ENCODE measurements at regions of chr10 and their contacts with region 1.

Region 1: DNA sequence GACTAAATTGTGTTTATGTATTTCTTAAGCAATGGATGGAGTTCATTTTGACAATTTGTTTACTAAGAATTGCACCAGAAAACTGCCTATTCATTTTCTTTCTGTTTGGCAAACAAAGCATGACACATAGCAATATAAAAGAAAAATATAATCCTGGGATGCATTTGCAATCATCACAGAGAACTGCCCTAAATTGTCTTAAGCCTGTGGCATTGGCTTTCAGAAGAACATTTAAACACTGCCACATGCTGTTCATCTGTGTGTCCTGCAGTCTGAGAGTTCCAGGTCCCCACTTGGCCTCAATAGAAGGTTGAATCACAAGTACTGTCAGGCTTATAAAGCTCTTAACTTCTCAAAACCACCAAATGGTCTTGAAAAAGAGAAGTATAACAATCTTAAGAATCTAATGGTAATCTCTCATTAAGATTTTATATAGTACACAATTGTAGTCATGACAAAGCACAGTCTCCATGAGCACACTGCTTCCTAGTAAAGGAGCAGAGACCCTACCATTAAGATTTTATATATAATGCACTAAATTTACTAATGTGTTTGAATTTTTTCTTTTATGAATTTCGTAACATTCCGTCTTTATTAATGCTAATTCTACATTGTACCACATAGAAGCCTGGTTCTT is 29.9 kb downstream of the RNLS start:
- DNase-seq: peak; percentile 30
- H3K4me3 ChIP-seq: no peak overlapping the region
- H3K27ac ChIP-seq: no peak overlapping the region
- H3K4me1 ChIP-seq: no peaks in the 10 kb centered on the region
- H3K27me3 ChIP-seq: no peaks in the 10 kb centered on the region
- CTCF ChIP-seq: peak in 3 of 4 experiments; percentile 57 to 83 (median 79)
- POLR2A ChIP-seq: no peak

Region 2: DNA sequence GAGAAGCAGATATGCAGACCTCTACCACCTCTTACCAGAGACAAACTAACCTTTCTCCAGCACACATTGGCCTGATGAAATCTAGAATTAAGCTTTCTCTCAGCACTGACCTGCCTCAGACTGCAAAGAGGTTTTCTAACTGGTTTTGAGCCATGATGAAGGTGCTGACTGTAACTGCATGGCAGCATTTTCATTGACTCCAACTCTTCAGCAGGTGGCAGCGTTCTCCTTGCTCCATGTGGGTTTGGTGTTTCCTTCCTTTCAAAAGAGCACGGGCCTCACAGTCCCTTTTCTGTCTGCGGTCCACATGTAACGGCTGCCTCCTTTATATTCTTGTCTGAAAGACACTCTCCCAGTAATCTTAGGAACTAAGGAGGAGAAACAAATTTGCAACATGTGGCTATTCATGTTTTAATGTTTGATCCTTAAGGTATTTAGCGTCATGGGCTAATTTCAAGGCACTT is 702.5 kb before region 1 on chr10:
- intact Hi-C with region 1: loop called (anchors 5 kb)
- DNase-seq: peak; percentile 65
- H3K4me3 ChIP-seq: no peak overlapping the region
- H3K27ac ChIP-seq: no peak overlapping the region
- H3K4me1 ChIP-seq: no peaks in the 10 kb centered on the region
- H3K27me3 ChIP-seq: no peaks in the 10 kb centered on the region
- CTCF ChIP-seq: peak; percentile 13 to 75 (median 66)
- POLR2A ChIP-seq: no peak

Region 3: DNA sequence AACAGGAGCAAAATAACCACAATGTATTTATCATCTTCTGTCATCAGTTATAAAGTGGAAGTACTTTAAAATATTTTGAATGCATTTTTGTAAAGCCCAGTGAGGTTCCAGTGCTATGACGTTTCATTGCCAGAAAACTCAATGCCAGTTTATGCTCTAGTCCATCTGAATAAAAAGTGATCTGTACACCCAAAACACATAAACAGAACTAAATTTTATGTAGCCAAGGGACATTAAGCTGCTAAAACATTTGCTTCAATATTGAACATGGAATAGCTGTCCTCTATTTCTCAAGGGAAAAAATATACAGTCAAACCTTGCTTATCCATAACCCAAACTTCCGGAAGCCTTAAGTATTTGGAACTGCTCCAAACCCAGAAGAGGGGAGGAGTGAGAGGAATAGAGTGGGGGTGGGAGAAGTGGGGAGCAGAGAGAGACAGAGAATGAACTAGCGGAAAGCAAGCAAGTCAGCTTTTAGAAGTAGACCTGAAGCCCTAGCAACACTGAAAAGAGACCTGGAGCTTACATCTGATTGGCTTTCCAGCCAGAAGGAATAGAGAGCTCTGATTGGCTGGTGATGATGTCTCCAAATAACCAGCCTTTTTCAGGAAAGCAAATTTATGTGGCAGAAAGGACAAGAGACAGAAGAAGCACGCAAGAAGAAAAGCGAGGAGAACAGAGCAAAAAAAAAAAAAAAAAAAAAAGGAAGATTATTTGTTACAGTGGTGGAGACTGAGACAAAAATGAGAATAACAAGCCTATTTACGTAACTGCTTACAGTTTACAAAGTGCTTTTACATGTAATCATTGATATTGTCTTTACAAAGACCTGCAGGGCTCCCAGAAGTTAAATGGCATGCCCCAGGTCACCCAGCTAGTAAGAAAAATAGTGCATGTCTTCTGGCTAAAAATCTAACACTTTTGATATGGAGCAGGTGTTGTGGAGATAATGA is 166.1 kb before region 1 on chr10:
- intact Hi-C with region 1: loop called (anchors 5 kb)
- DNase-seq: no peak
- H3K4me3 ChIP-seq: no peak overlapping the region
- H3K27ac ChIP-seq: peak overlapping the region in 1 of 2 donors; percentile 16
- H3K4me1 ChIP-seq: no peaks in the 10 kb centered on the region
- H3K27me3 ChIP-seq: no peaks in the 10 kb centered on the region
- CTCF ChIP-seq: no peak
- POLR2A ChIP-seq: no peak

Region 4: GRCh38 chr10:88401671-88402347 is 151.4 kb before region 1 on chr10:
- intact Hi-C with region 1: loop called (anchors 5 kb)
- DNase-seq: no peak
- H3K4me3 ChIP-seq: no peak overlapping the region
- H3K27ac ChIP-seq: no peak overlapping the region
- H3K4me1 ChIP-seq: no peaks in the 10 kb centered on the region
- H3K27me3 ChIP-seq: no peaks in the 10 kb centered on the region
- CTCF ChIP-seq: peak in 1 of 4 experiments; percentile 31
- POLR2A ChIP-seq: no peak

Region 5: GRCh38 chr10:89426230-89426868 is 873.1 kb after region 1 on chr10:
- intact Hi-C with region 1: no loop called
- DNase-seq: no peak
- H3K4me3 ChIP-seq: no peak overlapping the region
- H3K27ac ChIP-seq: no peak overlapping the region
- H3K4me1 ChIP-seq: no peaks in the 10 kb centered on the region
- H3K27me3 ChIP-seq: no peaks in the 10 kb centered on the region
- CTCF ChIP-seq: peak; percentile 56 to 80 (median 78)
- POLR2A ChIP-seq: no peak